Posterior vena cava (tissue), 2 donors: ENCODE measurements at regions of chr10 and their contacts with region 1.

Region 1: DNA sequence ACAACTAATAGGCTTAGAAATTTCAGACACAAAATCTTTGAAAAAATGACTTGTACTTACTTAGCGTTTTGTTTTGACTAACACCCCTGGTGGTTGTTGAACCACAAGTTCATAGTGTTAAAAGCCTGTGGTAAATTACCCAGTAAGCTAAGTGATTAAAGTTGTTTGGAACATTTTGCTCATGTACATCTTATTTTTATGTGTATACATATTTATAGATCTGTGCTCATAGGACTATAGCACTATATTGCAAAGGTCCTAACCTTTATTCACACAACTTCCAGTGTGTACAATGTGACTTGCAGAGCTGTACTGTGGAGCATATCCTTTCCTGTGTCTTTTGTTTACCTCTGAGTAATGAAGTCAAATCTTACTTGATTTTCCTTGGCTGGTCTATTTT is 79.6 kb downstream of the BMPR1A start:
- DNase-seq: no peak

Region 2: DNA sequence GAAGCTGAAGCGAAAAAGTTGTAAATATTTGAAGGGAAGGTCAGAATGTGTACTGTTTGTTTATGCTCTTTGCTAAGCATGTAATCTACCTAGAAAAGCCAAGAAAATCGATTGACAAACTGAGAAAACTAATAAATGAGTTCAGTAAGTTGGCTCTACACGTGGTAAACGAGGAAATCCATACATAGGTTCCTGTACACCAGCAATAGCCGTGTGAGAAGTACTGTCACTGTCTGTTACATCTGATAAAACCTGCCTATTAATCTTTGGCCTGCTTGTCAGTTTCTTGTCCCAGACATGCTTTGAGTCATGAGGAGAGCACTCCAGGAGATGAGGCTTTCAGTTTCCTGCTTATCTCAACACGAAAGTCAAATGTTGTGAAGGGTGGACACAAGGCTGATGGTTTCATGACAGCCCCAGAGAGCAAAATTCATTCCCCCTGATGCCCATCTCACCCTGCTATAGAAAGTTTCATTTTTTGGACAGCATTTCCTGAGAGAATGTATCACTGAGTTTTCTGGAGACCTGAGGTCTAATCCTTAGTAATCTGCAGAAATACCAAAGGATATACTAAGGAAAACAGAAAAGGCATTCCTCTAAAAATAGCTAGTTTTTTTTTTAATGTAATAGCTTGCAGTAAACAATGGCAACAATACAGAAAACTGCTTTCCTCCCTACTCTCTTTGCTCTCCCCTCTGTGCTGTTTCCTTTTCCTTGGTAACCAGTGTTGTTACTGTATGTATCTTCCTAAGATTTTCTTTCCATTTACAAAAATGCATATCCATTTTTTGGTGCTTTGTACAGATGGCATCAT is 60.8 kb before region 1 on chr10:
- intact Hi-C with region 1: loop called in 1 of 2 experiments (anchors 1 kb)
- DNase-seq: no peak